ENCODE measurements at regions of chr6 and their contacts with region 1.

Region 1: GRCh38 chr6:41917528-41917927 is 3.4 kb downstream of the MED20 start:
- DNase-seq: no peak
- H3K4me3 ChIP-seq: no peak overlapping the region
- H3K27ac ChIP-seq: no peak overlapping the region
- H3K4me1 ChIP-seq: peaks cover 19 to 52% (median 27%) of the 10 kb centered on the region in 4 donors
- H3K27me3 ChIP-seq: no peaks in the 10 kb centered on the region
- CTCF ChIP-seq: no peak
- EP300 ChIP-seq: no peak
- POLR2A ChIP-seq: no peak

Region 2: GRCh38 chr6:41787219-41787917 is 130.2 kb before region 1 on chr6 and contains the start of gene TOMM6:
- intact Hi-C with region 1: loop called (anchors 10 kb)
- DNase-seq: peak; percentile 96 to 98
- H3K4me3 ChIP-seq: peak within 1 kb of the TSS; percentile 66 to 98 (median 80)
- H3K27ac ChIP-seq: peak within 1 kb of the TSS; percentile 93 to 97 (median 96)
- H3K4me1 ChIP-seq: peaks cover 35 to 58% (median 56%) of the 10 kb centered on the region in 4 donors
- H3K27me3 ChIP-seq: no peaks in the 10 kb centered on the region
- CTCF ChIP-seq: peak in 6 of 7 experiments; percentile 68 to 99 (median 96)
- EP300 ChIP-seq: no peak
- POLR2A ChIP-seq: peak in 2 of 4 donors; percentile 52 to 73
- total RNA-seq, gene TOMM6: 11.9 to 159 (median 68.7) TPM

Region 3: GRCh38 chr6:41836022-41836659 is 81.4 kb before region 1 on chr6:
- intact Hi-C with region 1: no loop called
- DNase-seq: no peak
- H3K4me3 ChIP-seq: no peak overlapping the region
- H3K27ac ChIP-seq: no peak overlapping the region
- H3K4me1 ChIP-seq: no peaks in the 10 kb centered on the region
- H3K27me3 ChIP-seq: no peaks in the 10 kb centered on the region
- CTCF ChIP-seq: no peak
- EP300 ChIP-seq: no peak
- POLR2A ChIP-seq: no peak

Region 4: DNA sequence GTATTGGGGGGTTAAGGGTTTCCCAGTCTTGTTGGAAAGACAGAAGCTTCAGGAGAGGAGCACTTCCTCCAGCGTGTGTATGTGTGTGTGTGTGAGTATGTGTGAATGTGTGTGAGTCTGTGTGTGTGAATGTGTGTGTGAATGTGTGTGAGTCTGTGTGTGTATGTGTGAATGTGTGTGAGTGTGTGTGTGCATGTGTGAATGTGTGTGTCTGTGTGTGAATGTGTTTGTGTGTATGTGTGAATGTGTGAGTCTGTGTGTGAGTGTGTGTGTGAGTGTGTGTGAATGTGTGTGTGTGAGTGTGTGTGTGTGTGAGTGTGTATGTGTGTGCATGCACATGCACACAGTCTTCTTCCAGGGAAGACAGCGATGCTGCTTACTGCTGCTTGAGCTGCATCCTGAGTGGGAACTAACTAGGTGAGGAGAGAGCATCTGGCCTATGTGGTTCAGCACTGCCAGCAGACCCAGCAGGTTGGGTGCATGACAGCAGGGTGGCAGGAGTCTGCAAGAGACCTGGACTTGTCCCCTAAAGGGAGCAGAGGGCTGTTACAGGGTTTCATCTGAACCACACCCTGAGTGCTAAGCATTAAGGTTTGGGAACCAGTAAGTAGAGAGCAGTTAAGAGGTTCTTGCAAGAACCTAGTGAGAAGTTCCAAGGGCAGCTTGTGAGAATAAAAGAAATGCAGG is 46.8 kb after region 1 on chr6:
- intact Hi-C with region 1: no loop called
- DNase-seq: peak in 1 of 2 donors; percentile 10
- H3K4me3 ChIP-seq: no peak overlapping the region
- H3K27ac ChIP-seq: no peak overlapping the region
- H3K4me1 ChIP-seq: peaks cover 0 to 16% (median 5%) of the 10 kb centered on the region in 4 donors
- H3K27me3 ChIP-seq: no peaks in the 10 kb centered on the region
- CTCF ChIP-seq: no peak
- EP300 ChIP-seq: no peak
- POLR2A ChIP-seq: no peak

Measured in stomach (tissue), 19 donors.